Endothelial cell of umbilical vein (primary cell): ENCODE measurements at regions of chr7 and their contacts with region 1.

Region 1: GRCh38 chr7:94289071-94289470 is 105.6 kb upstream of the COL1A2 start:
- DNase-seq: peak; percentile 87
- H3K4me3 ChIP-seq: no peak overlapping the region
- H3K27ac ChIP-seq: no peak overlapping the region
- H3K4me1 ChIP-seq: no peaks in the 10 kb centered on the region
- H3K27me3 ChIP-seq: no peaks in the 10 kb centered on the region
- CTCF ChIP-seq: peak; percentile 90 to 96
- POLR2A ChIP-seq: no peak

Region 2: DNA sequence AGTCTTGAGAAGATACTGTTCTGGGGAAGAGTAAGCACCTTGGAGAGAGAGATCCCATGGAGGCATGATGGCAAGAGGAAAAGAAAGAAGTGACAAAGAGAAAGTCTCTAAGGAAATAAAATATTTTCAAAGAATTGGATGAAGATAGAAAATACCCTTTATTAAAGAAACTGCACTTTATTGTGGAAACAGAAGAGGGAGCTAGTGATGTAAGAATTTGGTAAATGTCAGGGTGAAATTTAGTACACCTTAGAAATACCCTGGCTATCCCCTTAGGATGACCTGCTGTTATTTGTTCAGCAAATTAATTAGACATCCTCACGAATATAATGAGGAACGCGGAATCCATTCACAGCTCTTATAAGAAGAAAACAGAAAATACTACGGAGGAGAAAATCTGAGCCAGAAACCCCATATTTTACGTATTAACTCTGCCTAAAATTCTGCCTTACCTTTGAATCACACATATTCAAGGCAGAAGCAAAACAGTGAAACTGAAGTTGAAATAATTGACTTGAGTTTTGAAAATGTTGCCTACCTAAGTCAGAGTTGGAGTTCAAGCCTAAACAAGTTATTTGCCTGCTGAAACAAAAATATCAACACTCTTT is 489.2 kb before region 1 on chr7:
- CTCF ChIA-PET with region 1: interaction called, 11 read pairs
- POLR2A ChIA-PET with region 1: no interaction called
- dilution Hi-C with region 1: no loop called
- intact Hi-C with region 1: no loop called
- DNase-seq: peak; percentile 43
- H3K4me3 ChIP-seq: no peak overlapping the region
- H3K27ac ChIP-seq: no peak overlapping the region
- H3K4me1 ChIP-seq: no peaks in the 10 kb centered on the region
- H3K27me3 ChIP-seq: no peaks in the 10 kb centered on the region
- CTCF ChIP-seq: peak; percentile 32 to 45
- POLR2A ChIP-seq: no peak

Region 3: GRCh38 chr7:94313926-94314325 is 24.9 kb after region 1 on chr7:
- CTCF ChIA-PET with region 1: interaction called, 15 read pairs
- POLR2A ChIA-PET with region 1: no interaction called
- dilution Hi-C with region 1: no loop called
- intact Hi-C with region 1: no loop called
- DNase-seq: peak; percentile 96
- H3K4me3 ChIP-seq: peak overlapping the region in 1 of 3 experiments; percentile 33
- H3K27ac ChIP-seq: peak overlapping the region; percentile 78
- H3K4me1 ChIP-seq: peaks cover 34% of the 10 kb centered on the region
- H3K27me3 ChIP-seq: no peaks in the 10 kb centered on the region
- CTCF ChIP-seq: no peak
- POLR2A ChIP-seq: peak; percentile 24

Region 4: GRCh38 chr7:94324380-94325117 is 35.5 kb after region 1 on chr7:
- CTCF ChIA-PET with region 1: no interaction called
- POLR2A ChIA-PET with region 1: no interaction called
- dilution Hi-C with region 1: no loop called
- intact Hi-C with region 1: no loop called
- DNase-seq: no peak
- H3K4me3 ChIP-seq: no peak overlapping the region
- H3K27ac ChIP-seq: no peak overlapping the region
- H3K4me1 ChIP-seq: no peaks in the 10 kb centered on the region
- H3K27me3 ChIP-seq: no peaks in the 10 kb centered on the region
- CTCF ChIP-seq: no peak
- POLR2A ChIP-seq: no peak

Region 5: DNA sequence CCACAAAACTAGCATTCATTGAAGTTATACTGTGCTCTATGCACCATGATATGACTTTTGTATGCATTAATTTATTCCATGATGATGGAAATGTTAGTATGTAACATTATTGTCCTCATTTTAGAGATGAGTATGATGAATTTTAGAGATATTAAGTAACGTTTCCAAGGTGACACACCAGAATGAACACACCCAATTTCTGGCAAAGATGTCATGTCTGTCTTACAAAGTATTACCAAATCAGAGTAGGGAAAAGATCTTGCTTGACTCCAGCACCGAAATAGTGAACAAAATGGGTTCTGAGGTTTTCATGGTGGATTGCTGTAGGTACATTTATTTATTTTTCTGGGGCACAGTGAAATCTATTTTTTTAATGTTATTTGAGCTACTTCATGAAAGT is 71.9 kb after region 1 on chr7:
- CTCF ChIA-PET with region 1: no interaction called
- POLR2A ChIA-PET with region 1: no interaction called
- dilution Hi-C with region 1: no loop called
- intact Hi-C with region 1: no loop called
- DNase-seq: no peak
- H3K4me3 ChIP-seq: no peak overlapping the region
- H3K27ac ChIP-seq: no peak overlapping the region
- H3K4me1 ChIP-seq: no peaks in the 10 kb centered on the region
- H3K27me3 ChIP-seq: no peaks in the 10 kb centered on the region
- CTCF ChIP-seq: no peak
- POLR2A ChIP-seq: no peak

Region 6: DNA sequence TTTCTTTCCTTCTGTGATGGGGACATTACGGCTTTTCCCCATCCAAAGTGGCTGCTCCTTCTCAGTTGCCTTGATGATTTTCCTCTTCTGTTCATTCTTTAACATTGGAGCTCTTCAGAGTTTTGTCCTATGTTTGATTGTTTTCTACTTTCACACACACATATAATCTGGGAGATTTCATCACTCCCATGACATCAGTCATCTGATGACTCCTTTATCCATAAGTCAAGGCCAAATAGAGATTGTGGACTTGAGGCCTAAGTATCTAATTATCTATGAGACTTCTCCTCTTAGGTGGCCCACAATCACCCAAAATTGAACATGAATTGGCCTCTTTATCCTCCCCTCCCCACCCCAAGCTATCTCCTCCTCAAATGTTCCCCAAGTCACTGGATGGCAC is 100.3 kb after region 1 on chr7:
- CTCF ChIA-PET with region 1: interaction called, 868 read pairs
- POLR2A ChIA-PET with region 1: no interaction called
- dilution Hi-C with region 1: no loop called
- intact Hi-C with region 1: no loop called
- DNase-seq: no peak
- H3K4me3 ChIP-seq: no peak overlapping the region
- H3K27ac ChIP-seq: no peak overlapping the region
- H3K4me1 ChIP-seq: no peaks in the 10 kb centered on the region
- H3K27me3 ChIP-seq: no peaks in the 10 kb centered on the region
- CTCF ChIP-seq: no peak
- POLR2A ChIP-seq: no peak

Region 7: DNA sequence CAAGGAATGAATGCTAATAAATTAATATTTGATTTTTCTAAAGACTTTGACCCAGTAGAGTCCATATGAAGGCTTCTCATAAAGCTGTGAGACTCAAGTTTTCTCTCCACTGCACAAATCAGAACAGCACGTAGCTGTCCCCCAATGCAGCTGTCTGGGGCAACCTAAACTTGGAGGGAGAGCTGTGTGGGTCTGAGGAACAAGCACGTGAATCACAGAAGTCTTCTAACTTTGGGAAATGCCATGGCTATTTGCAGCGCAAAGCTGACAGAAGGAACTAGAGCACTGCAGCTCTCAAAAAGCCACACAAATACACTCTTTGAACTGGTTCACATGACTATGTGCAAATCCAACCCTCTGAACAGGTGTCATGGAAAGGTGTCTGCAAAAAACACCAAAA is 153.6 kb after region 1 on chr7:
- CTCF ChIA-PET with region 1: interaction called, 276 read pairs
- POLR2A ChIA-PET with region 1: no interaction called
- dilution Hi-C with region 1: loop called (anchors 25 kb)
- intact Hi-C with region 1: no loop called
- DNase-seq: no peak
- H3K4me3 ChIP-seq: no peak overlapping the region
- H3K27ac ChIP-seq: no peak overlapping the region
- H3K4me1 ChIP-seq: no peaks in the 10 kb centered on the region
- H3K27me3 ChIP-seq: peaks cover 0 to 5% of the 10 kb centered on the region in 2 experiments
- CTCF ChIP-seq: no peak
- POLR2A ChIP-seq: no peak

Region 8: DNA sequence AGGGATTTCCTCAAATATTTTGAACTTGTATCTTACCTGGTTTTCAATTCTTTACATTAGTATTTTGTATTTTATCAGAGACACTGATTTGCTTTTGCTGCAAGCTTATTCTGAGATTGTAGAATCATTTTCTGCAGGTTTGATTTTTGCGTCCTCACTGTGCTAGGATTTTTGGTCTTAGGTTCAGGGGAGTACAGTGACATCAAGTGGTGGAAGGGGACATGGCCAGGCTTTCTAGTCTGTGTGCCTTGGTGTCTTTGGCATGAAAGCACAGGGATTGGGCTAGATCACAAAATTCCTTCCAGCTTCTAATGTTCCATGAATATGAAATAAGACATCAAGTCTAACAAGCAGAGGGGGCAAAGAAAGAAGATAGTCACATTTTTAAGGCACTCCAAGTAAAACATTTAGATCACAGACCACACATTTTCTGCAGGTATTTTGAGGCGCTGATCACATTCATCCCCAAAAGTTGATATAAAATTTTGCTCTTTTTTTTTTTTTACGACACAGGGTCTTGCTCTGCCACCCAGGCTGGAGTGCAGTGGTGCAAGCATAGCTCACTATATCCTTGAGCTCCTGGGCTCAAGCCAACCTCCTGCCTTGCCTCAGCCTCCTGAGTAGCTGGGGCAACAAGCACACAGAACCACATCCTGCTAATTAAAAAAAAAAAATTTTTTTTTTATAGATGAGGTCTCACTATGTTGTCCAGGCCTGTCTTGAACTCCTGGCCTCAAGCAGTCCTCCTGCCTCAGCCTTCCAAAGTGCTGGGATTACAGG is 910.9 kb after region 1 on chr7:
- CTCF ChIA-PET with region 1: interaction called, 10 read pairs
- POLR2A ChIA-PET with region 1: no interaction called
- dilution Hi-C with region 1: no loop called
- intact Hi-C with region 1: no loop called
- DNase-seq: peak; percentile 41
- H3K4me3 ChIP-seq: no peak overlapping the region
- H3K27ac ChIP-seq: no peak overlapping the region
- H3K4me1 ChIP-seq: no peaks in the 10 kb centered on the region
- H3K27me3 ChIP-seq: no peaks in the 10 kb centered on the region
- CTCF ChIP-seq: peak; percentile 49 to 65
- POLR2A ChIP-seq: no peak